OCI-LY7 (cell line): ENCODE measurements at regions of chr14 and their contacts with region 1.

Region 1: DNA sequence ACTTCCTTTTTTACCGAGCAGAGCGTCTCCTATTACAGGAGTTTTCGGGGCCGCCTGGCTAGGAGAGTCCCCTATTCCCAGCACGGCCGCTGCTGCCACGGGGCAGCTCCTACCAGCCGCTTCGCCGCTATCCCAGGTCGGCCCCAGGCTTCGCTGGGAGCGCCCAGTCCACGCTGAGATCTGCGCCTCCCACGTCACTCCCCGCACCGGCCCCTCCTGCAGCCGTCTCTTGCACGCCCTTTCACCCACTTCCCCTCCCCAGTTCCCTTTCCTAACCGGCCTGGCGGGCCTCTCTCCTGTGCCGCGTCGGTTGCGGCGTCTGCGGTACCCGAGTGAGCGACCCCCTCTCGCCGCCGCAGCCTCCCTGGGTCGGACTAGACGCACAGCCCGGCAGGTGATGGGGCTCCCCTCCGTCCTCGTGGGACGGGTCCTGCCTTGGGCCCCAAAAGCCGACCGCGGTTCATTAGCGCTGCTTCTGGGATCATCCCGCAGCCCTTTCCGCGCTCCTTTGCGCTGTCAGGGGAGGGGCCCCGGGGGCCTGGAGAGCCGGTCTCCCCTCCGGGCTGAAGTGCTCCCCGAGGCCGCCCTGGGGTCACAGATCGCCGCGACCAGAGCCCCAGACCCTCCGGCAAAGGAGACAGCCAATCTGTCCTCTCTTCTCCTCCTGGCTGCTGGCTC is 1318.4 kb downstream of the TMEM121 start:
- DNase-seq: peak; percentile 82
- H3K4me3 ChIP-seq: peak overlapping the region; percentile 87
- H3K27ac ChIP-seq: peak overlapping the region; percentile 98
- H3K4me1 ChIP-seq: peaks cover 69% of the 10 kb centered on the region
- CTCF ChIP-seq: no peak

Region 2: GRCh38 chr14:106872611-106873446 is 28.1 kb after region 1 on chr14:
- CTCF ChIA-PET with region 1: interaction called, 24 read pairs
- POLR2A ChIA-PET with region 1: interaction called, 16 read pairs
- intact Hi-C with region 1: loop called (anchors 1 kb)
- DNase-seq: peak; percentile 90
- H3K4me3 ChIP-seq: peak overlapping the region; percentile 62
- H3K27ac ChIP-seq: peak overlapping the region; percentile 88
- H3K4me1 ChIP-seq: peaks cover 59% of the 10 kb centered on the region
- CTCF ChIP-seq: peak; percentile 87